Activated CD4-positive, alpha-beta T cell treated with anti-CD3 and anti-CD28 coated beads for 36 hours (primary cell): ENCODE measurements at regions of chr22 and their contacts with region 1.

Region 1: DNA sequence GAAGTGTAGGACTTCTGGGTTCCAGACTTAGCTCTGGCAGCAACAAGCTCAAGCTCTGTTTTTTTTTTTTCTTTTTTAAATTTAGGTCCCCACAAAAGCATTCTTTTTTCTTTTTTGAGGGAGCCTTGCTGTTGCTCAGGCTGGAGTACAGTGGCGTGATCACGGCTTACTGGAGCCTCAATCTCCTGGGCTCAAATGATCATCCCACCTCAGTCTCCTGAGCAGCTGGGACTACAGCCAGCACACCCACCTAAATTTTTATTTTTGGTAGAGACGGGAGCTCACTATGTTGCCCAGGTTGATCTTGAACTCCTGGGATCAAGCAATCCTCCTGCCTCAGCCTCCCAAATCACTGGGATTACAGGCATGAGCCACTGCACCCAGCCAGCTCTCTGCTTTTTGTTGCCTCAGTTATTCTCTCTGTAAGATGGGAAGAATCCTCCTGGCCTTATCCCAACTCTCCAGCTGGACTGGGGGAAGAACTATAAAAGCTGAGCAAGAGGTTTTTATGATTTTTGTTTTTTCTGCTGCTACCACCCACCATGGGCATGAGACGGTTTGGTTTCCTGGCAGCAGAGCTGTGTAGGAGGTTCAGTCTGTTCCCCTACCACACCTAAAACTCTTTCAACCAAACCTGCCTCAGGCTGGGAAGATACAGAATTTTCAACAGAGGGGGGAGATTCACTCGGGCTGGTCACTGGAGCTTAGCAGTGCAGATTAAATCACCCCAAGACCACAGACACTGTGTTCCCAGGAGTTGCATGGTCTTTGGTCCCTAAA is 11.6 kb upstream of the MTFP1 start:
- DNase-seq: peak; percentile 48
- ATAC-seq: peak; percentile 61
- H3K4me3 Mint-ChIP-seq: no peak overlapping the region
- H3K27ac Mint-ChIP-seq: peak overlapping the region; percentile 79
- H3K4me1 Mint-ChIP-seq: peaks cover 47% of the 10 kb centered on the region
- H3K27me3 Mint-ChIP-seq: no peaks in the 10 kb centered on the region

Region 2: GRCh38 chr22:30396871-30397655 is 16.9 kb before region 1 on chr22 and contains the start of gene SEC14L2:
- CTCF ChIA-PET with region 1: interaction called, 11 read pairs
- POLR2A ChIA-PET with region 1: interaction called, 3 read pairs
- intact Hi-C with region 1: no loop called
- DNase-seq: peak; percentile 84
- ATAC-seq: peak; percentile 91
- H3K4me3 Mint-ChIP-seq: peak within 1 kb of the TSS; percentile 83
- H3K27ac Mint-ChIP-seq: peak within 1 kb of the TSS; percentile 56
- H3K4me1 Mint-ChIP-seq: peaks cover 36% of the 10 kb centered on the region
- H3K27me3 Mint-ChIP-seq: no peaks in the 10 kb centered on the region
- total RNA-seq, gene SEC14L2: 13.8 to 18.2 TPM

Region 3: DNA sequence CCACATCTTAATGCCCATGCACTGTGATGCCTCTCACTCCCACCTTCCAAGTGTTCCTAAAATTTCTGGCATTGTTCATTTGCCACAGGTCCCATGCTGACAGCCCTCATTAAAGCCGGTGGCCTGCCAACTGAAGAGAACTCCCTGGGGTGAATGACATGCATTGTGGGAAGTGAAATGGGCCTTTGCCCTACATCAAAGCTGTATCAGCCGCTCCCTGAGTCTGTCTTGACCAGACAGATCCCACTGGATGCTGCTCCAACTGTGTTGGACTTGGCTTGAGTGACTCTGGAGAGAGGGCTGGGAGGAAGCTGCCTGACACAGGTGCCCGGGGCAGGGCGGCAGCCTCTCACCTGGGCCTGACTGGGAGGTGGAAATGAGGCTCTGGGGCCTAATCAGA is 100.3 kb after region 1 on chr22:
- CTCF ChIA-PET with region 1: no interaction called
- POLR2A ChIA-PET with region 1: no interaction called
- intact Hi-C with region 1: no loop called
- DNase-seq: no peak
- ATAC-seq: no peak
- H3K4me3 Mint-ChIP-seq: no peak overlapping the region
- H3K27ac Mint-ChIP-seq: no peak overlapping the region
- H3K4me1 Mint-ChIP-seq: no peaks in the 10 kb centered on the region
- H3K27me3 Mint-ChIP-seq: no peaks in the 10 kb centered on the region